K562 (cell line): ENCODE measurements at regions of chr14 and their contacts with region 1.

Region 1: DNA sequence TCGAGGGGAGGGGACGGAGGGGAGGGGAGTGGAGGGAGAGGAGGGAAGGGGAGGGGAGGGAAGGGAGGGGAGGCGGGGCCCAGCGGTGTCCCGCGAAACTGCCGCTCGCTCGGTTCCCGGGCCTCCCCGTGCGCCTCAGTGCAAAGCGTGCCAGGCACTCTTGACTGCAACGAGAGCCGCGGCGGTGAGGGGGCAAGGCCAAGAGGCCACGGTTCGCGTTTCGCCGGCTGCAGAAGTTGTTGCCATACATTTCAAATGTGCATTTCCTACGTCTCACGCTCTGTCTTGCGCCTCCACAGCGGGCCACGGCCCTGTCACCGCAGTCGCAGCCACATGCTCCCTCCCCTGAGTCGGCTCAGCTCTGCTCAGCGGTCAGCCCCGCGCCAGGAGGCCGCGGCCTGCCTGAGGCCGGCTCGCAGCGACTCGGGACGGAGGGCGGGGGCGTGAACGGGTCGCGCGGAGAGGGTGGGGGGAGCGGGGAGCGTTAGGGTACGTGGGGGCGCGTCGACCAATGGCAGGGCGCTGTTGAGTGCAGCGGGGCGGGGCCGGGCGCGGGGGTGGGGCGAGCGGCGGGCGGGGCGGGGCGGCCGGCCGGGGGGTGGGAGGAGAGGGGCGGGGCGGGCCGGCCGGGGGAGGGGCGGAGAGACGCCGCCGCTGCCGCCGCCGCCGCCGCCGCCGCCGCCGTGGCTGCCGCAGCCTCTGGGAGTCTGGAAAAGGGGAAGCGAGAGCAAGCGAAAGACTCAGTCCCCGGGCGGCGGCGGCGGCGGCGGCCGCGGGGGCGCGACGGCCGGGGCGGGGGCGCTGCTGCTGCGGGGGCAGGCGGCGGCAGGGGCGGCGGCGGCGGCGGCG is at the start of gene PPP2R5C:
- DNase-seq: peak; percentile 82 to 93 (median 87)
- ATAC-seq: peak; percentile 89
- H3K4me3 ChIP-seq: peak within 1 kb of the TSS; percentile 89
- H3K27ac ChIP-seq: peak within 1 kb of the TSS; percentile 99
- H3K4me1 ChIP-seq: peaks cover 15 to 31% of the 10 kb centered on the region in 2 experiments
- H3K27me3 ChIP-seq: no peaks in the 10 kb centered on the region
- CTCF ChIP-seq: 0 out of 6 replicates have a peak, but pooled peaks of 1 of the 3 experiments have one; percentile 3
- EP300 ChIP-seq: no peak
- POLR2A ChIP-seq: peak; percentile 96
- RAD21 ChIP-seq: no peak
- polyA plus RNA-seq, gene PPP2R5C: 517 to 617 TPM

Region 2: GRCh38 chr14:101716956-101717662 is 44.1 kb before region 1 on chr14:
- CTCF ChIA-PET with region 1: no interaction called
- POLR2A ChIA-PET with region 1: interaction called, 5 read pairs
- in situ Hi-C with region 1: loop called (anchors 5 kb)
- intact Hi-C with region 1: loop called (anchors 1 kb)
- DNase-seq: peak in 2 of 4 experiments; percentile 1 to 43
- ATAC-seq: no peak
- H3K4me3 ChIP-seq: no peak overlapping the region
- H3K27ac ChIP-seq: peak overlapping the region; percentile 100; the same call in 2 of the 3 replicates
- H3K4me1 ChIP-seq: peaks cover 30 to 38% of the 10 kb centered on the region in 2 experiments; a peak in 4 of 5 replicates
- H3K27me3 ChIP-seq: no peaks in the 10 kb centered on the region
- CTCF ChIP-seq: no peak
- EP300 ChIP-seq: no peak
- POLR2A ChIP-seq: no peak
- RAD21 ChIP-seq: no peak

Region 3: GRCh38 chr14:101947906-101948665 is 186.8 kb after region 1 on chr14:
- CTCF ChIA-PET with region 1: no interaction called
- POLR2A ChIA-PET with region 1: no interaction called
- in situ Hi-C with region 1: no loop called
- intact Hi-C with region 1: loop called (anchors 5 kb)
- DNase-seq: peak; percentile 94 to 99 (median 96)
- ATAC-seq: peak; percentile 99
- H3K4me3 ChIP-seq: peak overlapping the region; percentile 96
- H3K27ac ChIP-seq: peak overlapping the region; percentile 99
- H3K4me1 ChIP-seq: peaks cover 5 to 18% of the 10 kb centered on the region in 2 experiments; a peak in 4 of 5 replicates
- H3K27me3 ChIP-seq: no peaks in the 10 kb centered on the region
- CTCF ChIP-seq: peak in 1 of 3 experiments; percentile 37; a peak in 1 of 6 replicates
- EP300 ChIP-seq: 0 out of 2 replicates have a peak, but pooled peaks have one; percentile 8
- POLR2A ChIP-seq: peak; percentile 97
- RAD21 ChIP-seq: no peak